MCF 10A (cell line): ENCODE measurements at regions of chr12 and their contacts with region 1.

Region 1: DNA sequence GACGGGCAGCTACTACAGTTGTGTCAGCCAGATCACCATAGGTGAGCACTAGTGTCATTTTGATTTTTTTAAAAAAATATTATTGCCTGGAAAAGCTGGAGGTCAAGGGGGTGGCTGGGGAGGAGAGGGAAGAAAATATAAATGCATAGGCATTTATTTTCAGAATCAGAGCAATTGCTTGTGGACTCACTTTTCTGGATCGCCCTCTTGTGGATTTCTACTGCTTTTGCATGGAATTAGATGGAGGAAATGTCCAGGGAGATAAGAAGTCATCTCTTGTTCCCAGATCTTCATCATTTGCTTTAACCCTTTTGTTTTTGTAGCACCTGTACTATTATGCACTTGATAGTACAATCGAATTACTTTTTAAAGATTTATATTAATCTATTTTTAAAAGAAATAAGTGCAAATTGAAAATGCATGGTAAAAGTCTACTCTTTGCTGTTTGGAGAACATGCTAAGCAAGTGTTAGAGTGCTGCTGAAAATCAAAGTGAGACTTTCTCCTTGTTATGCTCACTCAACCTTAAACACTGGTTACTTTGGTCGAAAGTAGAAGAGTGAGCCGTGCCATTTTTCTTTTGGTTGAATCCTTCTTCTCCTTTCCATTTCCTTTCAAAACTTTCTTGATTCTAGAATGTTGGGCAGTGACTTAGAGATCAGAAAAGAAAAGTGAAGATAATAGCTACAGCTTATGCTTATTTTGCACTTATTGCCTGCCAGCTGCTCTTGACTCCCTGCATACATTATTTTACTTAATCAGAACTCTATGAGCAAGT is 60.6 kb upstream of the ANO4 start:
- DNase-seq: peak; percentile 51
- H3K4me3 Mint-ChIP-seq: no peak overlapping the region
- H3K27ac Mint-ChIP-seq: no peak overlapping the region
- H3K4me1 Mint-ChIP-seq: no peaks in the 10 kb centered on the region
- H3K27me3 Mint-ChIP-seq: peaks cover 59% of the 10 kb centered on the region
- CTCF ChIP-seq: peak; percentile 74

Region 2: GRCh38 chr12:100234598-100235304 is 499.3 kb before region 1 on chr12:
- CTCF ChIA-PET with region 1: interaction called, 8 read pairs
- POLR2A ChIA-PET with region 1: no interaction called
- intact Hi-C with region 1: loop called (anchors 1 kb)
- DNase-seq: peak; percentile 56
- H3K4me3 Mint-ChIP-seq: no peak overlapping the region
- H3K27ac Mint-ChIP-seq: no peak overlapping the region
- H3K4me1 Mint-ChIP-seq: peaks cover 6% of the 10 kb centered on the region
- H3K27me3 Mint-ChIP-seq: no peaks in the 10 kb centered on the region
- CTCF ChIP-seq: peak; percentile 60

Region 3: DNA sequence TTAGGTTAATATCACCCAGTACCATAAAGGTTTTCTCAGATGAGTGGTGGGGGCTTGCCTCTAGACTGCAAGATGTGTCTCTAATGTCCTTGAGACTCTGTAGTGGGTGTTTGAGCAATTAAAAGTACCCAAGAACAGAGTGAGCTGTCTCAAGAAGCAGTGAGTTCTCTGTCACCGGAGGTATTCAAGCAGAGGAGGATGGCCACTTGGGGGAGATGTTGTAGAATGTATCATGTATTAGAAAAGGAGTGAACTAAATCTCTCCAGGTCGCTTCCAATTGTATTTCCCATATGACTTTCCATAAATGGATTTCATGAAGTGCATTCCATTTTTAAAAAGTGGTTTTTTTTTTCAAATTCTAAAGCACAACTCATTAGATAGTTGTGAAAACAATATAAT is 342.1 kb before region 1 on chr12:
- CTCF ChIA-PET with region 1: interaction called, 3 read pairs
- POLR2A ChIA-PET with region 1: no interaction called
- intact Hi-C with region 1: loop called (anchors 5 kb)
- DNase-seq: peak; percentile 35
- H3K4me3 Mint-ChIP-seq: no peak overlapping the region
- H3K27ac Mint-ChIP-seq: no peak overlapping the region
- H3K4me1 Mint-ChIP-seq: no peaks in the 10 kb centered on the region
- H3K27me3 Mint-ChIP-seq: no peaks in the 10 kb centered on the region
- CTCF ChIP-seq: peak; percentile 28

Region 4: GRCh38 chr12:100426145-100426544 is 307.9 kb before region 1 on chr12:
- CTCF ChIA-PET with region 1: no interaction called
- POLR2A ChIA-PET with region 1: no interaction called
- intact Hi-C with region 1: no loop called
- DNase-seq: no peak
- H3K4me3 Mint-ChIP-seq: no peak overlapping the region
- H3K27ac Mint-ChIP-seq: no peak overlapping the region
- H3K4me1 Mint-ChIP-seq: peaks cover 14% of the 10 kb centered on the region
- H3K27me3 Mint-ChIP-seq: no peaks in the 10 kb centered on the region
- CTCF ChIP-seq: no peak

Region 5: DNA sequence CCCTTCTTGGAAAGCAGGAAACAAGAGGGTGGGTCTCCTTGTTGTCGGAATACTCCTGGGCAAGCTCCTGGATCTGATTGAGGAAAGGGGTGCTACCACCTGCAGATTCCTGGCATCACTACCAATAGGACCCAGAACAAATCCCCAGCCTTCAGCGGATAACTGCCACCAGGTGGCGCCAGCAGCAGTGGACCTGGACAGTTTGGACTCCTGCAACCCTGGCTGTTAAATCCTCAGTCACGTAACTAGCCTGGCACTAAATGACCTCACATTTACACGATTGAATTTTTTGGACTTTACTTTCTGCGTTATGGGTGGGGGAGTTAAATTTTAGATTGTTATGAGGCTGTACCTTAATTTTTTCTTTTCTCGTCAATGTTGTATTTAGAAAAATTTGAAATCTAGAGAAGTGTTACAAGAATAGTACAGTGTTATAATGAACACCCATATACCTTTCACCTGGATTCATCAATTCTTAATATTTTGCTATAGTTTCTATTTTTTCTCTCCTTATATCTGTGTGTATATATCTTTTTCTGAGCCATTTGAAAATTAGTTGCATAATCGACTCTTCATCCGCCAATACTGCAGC is 65.0 kb before region 1 on chr12:
- CTCF ChIA-PET with region 1: interaction called, 80 read pairs
- POLR2A ChIA-PET with region 1: interaction called, 3 read pairs
- intact Hi-C with region 1: loop called (anchors 1 kb)
- DNase-seq: peak; percentile 83
- H3K4me3 Mint-ChIP-seq: no peak overlapping the region
- H3K27ac Mint-ChIP-seq: no peak overlapping the region
- H3K4me1 Mint-ChIP-seq: no peaks in the 10 kb centered on the region
- H3K27me3 Mint-ChIP-seq: peaks cover 23% of the 10 kb centered on the region
- CTCF ChIP-seq: peak; percentile 86

Region 6: DNA sequence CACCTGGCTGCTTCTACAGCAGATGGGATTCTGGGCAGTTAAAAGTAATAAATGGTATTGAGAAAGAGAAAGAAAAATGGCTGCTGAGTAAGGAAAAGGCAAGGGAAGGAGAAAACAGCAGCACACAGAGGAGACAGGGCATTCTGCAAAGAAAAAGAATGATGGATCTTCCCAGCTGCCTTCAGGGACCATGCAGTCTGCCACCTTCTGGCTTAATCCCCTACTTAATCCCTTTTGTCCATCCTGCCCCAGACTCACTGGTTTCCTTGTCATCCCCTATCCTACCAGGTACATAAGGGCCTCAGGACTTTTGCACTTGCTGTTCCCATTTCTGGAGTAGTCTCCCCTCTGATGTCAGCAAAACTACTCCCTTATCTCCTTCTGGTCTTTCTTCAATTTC is 52.9 kb before region 1 on chr12:
- CTCF ChIA-PET with region 1: interaction called, 14 read pairs
- POLR2A ChIA-PET with region 1: no interaction called
- intact Hi-C with region 1: no loop called
- DNase-seq: no peak
- H3K4me3 Mint-ChIP-seq: no peak overlapping the region
- H3K27ac Mint-ChIP-seq: no peak overlapping the region
- H3K4me1 Mint-ChIP-seq: no peaks in the 10 kb centered on the region
- H3K27me3 Mint-ChIP-seq: no peaks in the 10 kb centered on the region
- CTCF ChIP-seq: no peak

Region 7: DNA sequence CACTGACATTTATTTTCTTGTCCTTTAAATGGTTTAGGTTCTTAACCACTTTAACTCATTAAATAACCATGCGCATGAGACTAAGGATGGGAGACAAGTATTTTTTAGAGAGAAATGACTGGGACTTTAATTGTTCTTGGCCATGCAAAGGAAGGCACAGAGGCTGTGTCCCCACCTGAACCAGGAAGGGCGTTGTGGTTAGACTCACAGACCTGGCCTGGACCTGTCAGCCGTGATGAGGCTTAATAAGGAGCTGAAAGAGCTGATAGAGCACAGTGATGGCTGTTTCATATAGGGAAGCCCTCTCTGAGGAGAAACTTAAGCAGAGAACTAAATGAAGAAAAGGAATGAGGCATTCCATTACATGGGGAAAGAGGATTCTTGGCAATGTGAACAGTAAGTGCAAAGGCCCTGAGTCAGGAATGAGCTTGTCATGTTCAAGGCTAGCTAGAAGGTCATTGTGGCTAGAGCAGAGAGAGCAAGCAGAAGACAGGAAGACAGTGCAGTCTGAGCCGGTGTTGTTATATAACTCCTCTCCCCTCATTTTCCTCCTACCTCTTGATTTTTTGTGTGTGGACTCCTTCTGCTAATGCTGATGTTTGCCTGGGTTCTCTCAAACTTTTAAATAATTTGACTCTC is 13.9 kb before region 1 on chr12:
- CTCF ChIA-PET with region 1: interaction called, 12 read pairs
- POLR2A ChIA-PET with region 1: no interaction called
- intact Hi-C with region 1: no loop called
- DNase-seq: no peak
- H3K4me3 Mint-ChIP-seq: no peak overlapping the region
- H3K27ac Mint-ChIP-seq: no peak overlapping the region
- H3K4me1 Mint-ChIP-seq: no peaks in the 10 kb centered on the region
- H3K27me3 Mint-ChIP-seq: no peaks in the 10 kb centered on the region
- CTCF ChIP-seq: no peak